ENCODE measurements at regions of chr3 and their contacts with region 1.

Region 1: GRCh38 chr3:38496131-38496910 is at the start of gene EXOG:
- DNase-seq: peak; percentile 97
- H3K4me3 Mint-ChIP-seq: peak within 1 kb of the TSS; percentile 97
- H3K27ac Mint-ChIP-seq: peak within 1 kb of the TSS; percentile 91
- H3K4me1 Mint-ChIP-seq: peaks cover 19% of the 10 kb centered on the region
- H3K27me3 Mint-ChIP-seq: no peaks in the 10 kb centered on the region
- total RNA-seq, gene EXOG: 11.7 to 13.0 TPM

Region 2: GRCh38 chr3:38136777-38137614 is 359.3 kb before region 1 on chr3 and contains the start of gene ACAA1:
- CTCF ChIA-PET with region 1: no interaction called
- POLR2A ChIA-PET with region 1: interaction called, 4 read pairs
- intact Hi-C with region 1: loop called (anchors 1 kb)
- DNase-seq: peak; percentile 99
- H3K4me3 Mint-ChIP-seq: peak within 1 kb of the TSS; percentile 80
- H3K27ac Mint-ChIP-seq: peak within 1 kb of the TSS; percentile 93
- H3K4me1 Mint-ChIP-seq: peaks cover 55% of the 10 kb centered on the region
- H3K27me3 Mint-ChIP-seq: no peaks in the 10 kb centered on the region
- total RNA-seq, gene ACAA1: 55.5 to 57.7 TPM

Region 3: GRCh38 chr3:38397320-38397719 is 99.0 kb before region 1 on chr3:
- CTCF ChIA-PET with region 1: no interaction called
- POLR2A ChIA-PET with region 1: no interaction called
- intact Hi-C with region 1: no loop called
- DNase-seq: peak; percentile 18
- H3K4me3 Mint-ChIP-seq: no peak overlapping the region
- H3K27ac Mint-ChIP-seq: no peak overlapping the region
- H3K4me1 Mint-ChIP-seq: no peaks in the 10 kb centered on the region
- H3K27me3 Mint-ChIP-seq: no peaks in the 10 kb centered on the region

Region 4: GRCh38 chr3:38453075-38453912 is 43.0 kb before region 1 on chr3 and contains the start of gene ACVR2B:
- CTCF ChIA-PET with region 1: no interaction called
- POLR2A ChIA-PET with region 1: interaction called, 3 read pairs
- intact Hi-C with region 1: loop called (anchors 1 kb)
- DNase-seq: peak; percentile 82
- H3K4me3 Mint-ChIP-seq: peak within 1 kb of the TSS; percentile 96
- H3K27ac Mint-ChIP-seq: peak within 1 kb of the TSS; percentile 70
- H3K4me1 Mint-ChIP-seq: peaks cover 2% of the 10 kb centered on the region
- H3K27me3 Mint-ChIP-seq: no peaks in the 10 kb centered on the region
- total RNA-seq, gene ACVR2B: 7.1 to 7.8 TPM

Region 5: GRCh38 chr3:38507120-38507519 is 10.8 kb after region 1 on chr3:
- CTCF ChIA-PET with region 1: interaction called, 11 read pairs
- POLR2A ChIA-PET with region 1: no interaction called
- intact Hi-C with region 1: no loop called
- DNase-seq: no peak
- H3K4me3 Mint-ChIP-seq: no peak overlapping the region
- H3K27ac Mint-ChIP-seq: no peak overlapping the region
- H3K4me1 Mint-ChIP-seq: no peaks in the 10 kb centered on the region
- H3K27me3 Mint-ChIP-seq: no peaks in the 10 kb centered on the region

Region 6: DNA sequence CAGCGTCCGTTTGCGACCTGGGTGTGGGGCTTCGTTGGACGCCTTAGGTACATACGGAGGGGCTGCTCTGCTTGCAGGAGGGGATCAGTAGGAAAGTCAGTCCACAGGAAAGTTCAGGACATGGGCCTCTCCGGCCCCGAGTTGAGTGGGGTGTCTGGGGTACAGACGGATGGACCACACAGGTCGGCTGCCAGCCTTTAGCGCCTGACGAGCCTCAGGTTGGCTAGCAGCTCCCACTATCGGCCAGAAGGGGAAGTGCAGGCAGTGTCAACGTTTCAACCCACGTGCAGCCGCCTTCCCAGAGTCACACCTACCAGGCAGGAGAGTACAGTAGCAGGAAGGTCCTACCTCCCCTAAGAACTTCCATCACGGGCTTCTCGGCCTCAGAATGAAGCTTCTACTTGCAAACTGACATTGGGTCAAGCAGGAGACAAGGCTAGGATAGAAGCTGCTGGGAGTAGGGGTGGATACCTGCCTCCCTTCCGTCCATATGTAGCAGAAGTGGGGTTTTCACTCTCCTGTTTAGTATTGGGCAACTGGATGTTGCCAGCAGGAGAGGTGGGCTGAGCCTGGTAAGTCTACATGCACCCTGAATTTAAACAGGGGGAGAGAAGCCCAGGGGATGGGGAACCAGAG is 155.0 kb after region 1 on chr3:
- CTCF ChIA-PET with region 1: interaction called, 15 read pairs
- POLR2A ChIA-PET with region 1: interaction called, 4 read pairs
- intact Hi-C with region 1: loop called (anchors 1 kb)
- DNase-seq: peak; percentile 80
- H3K4me3 Mint-ChIP-seq: peak overlapping the region; percentile 10
- H3K27ac Mint-ChIP-seq: no peak overlapping the region
- H3K4me1 Mint-ChIP-seq: peaks cover 11% of the 10 kb centered on the region
- H3K27me3 Mint-ChIP-seq: peaks cover 13% of the 10 kb centered on the region

Region 7: DNA sequence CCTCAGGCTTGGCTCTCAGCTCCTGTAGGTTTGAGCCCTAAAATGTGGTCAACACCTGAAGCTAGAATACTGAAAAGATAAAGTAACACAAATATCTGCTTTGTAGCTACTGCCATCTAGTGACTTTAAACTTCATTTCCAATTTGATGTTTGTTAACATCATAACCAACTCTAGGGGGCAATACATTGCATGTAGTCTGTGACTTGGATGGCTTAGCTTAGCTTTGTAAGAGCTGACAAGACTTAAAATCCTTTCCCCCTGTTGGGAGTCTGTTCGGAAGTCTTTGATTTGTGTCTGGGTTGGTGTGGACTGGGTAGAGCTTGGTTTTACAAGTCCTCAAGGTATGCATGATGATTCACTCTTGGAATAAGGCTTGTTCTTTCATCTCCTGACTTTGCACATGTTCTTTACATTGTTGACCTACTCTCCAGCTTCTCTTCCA is 503.7 kb after region 1 on chr3:
- CTCF ChIA-PET with region 1: interaction called, 11 read pairs
- POLR2A ChIA-PET with region 1: no interaction called
- intact Hi-C with region 1: no loop called
- DNase-seq: no peak
- H3K4me3 Mint-ChIP-seq: no peak overlapping the region
- H3K27ac Mint-ChIP-seq: no peak overlapping the region
- H3K4me1 Mint-ChIP-seq: no peaks in the 10 kb centered on the region
- H3K27me3 Mint-ChIP-seq: peaks cover 2% of the 10 kb centered on the region

Measured in activated CD4-positive, alpha-beta memory T cell treated with anti-CD3 and anti-CD28 coated beads for 36 hours (primary cell).